ENCODE measurements at regions of chrX and their contacts with region 1.

Region 1: DNA sequence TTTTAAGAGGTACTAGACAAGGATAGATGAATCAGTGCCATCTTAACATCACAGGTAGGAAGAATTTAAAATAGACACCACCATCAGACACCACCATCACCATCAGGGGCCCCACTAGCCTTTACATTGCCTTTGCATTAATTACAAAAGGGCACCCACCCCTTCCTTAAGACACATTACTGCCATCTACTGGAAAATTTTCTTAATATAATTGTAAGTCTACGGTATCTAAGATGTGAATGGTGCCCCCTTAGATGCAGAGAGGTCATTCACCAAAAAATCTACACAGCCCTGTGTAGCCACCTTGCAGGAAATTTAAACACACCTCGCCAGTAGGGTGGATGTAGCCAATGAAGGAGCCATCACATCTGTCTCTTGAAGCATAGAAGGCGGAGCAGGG is 184.1 kb downstream of the MID1IP1 start:
- DNase-seq: no peak
- H3K4me3 Mint-ChIP-seq: no peak overlapping the region
- H3K27ac Mint-ChIP-seq: no peak overlapping the region
- H3K4me1 Mint-ChIP-seq: no peaks in the 10 kb centered on the region
- H3K27me3 Mint-ChIP-seq: no peaks in the 10 kb centered on the region

Region 2: GRCh38 chrX:38754102-38754790 is 231.1 kb before region 1 on chrX:
- CTCF ChIA-PET with region 1: interaction called, 3 read pairs
- POLR2A ChIA-PET with region 1: no interaction called
- intact Hi-C with region 1: loop called (anchors 1 kb)
- DNase-seq: peak; percentile 31
- H3K4me3 Mint-ChIP-seq: no peak overlapping the region
- H3K27ac Mint-ChIP-seq: no peak overlapping the region
- H3K4me1 Mint-ChIP-seq: no peaks in the 10 kb centered on the region
- H3K27me3 Mint-ChIP-seq: no peaks in the 10 kb centered on the region

Region 3: GRCh38 chrX:38768079-38768478 is 217.3 kb before region 1 on chrX:
- CTCF ChIA-PET with region 1: interaction called, 21 read pairs
- POLR2A ChIA-PET with region 1: no interaction called
- intact Hi-C with region 1: loop called (anchors 1 kb)
- DNase-seq: no peak
- H3K4me3 Mint-ChIP-seq: no peak overlapping the region
- H3K27ac Mint-ChIP-seq: no peak overlapping the region
- H3K4me1 Mint-ChIP-seq: no peaks in the 10 kb centered on the region
- H3K27me3 Mint-ChIP-seq: no peaks in the 10 kb centered on the region

Region 4: DNA sequence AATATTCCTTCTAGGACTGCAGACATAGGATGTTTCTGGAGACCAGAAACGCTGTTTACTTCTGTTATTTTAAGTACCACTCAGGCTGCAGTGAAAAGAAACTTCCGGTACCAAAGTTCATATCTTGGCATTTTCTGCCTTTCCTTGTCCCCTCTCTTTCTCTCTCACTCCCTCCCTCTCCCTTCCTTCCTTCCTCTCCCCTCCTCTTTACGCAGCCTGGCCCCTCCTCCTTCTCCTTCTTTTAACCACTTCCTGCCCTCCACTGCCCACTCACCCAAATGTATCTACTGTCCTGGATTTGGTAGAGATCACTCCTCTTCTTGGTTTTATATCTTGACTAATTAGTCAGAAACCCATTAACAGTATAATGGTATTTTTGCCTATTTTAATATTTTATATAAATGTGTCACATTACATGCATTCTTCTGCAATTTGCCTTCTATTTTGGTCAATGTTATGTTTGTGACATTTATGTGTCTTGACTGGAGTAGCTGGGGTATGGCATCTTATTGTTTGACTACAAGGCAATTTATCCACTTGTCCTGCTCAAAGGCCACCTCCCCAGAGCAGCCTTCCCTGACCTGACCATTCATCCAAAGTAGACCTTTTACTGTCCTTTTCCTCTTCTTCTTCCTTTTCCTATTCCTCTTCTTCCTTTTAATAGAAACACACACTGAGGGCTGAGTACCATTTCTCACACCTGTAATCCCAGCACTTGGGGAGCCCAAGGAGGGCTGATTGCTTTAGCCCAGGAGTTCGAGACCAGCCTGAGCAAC is 1055.5 kb after region 1 on chrX:
- CTCF ChIA-PET with region 1: no interaction called
- POLR2A ChIA-PET with region 1: no interaction called
- intact Hi-C with region 1: no loop called
- DNase-seq: peak; percentile 20
- H3K4me3 Mint-ChIP-seq: no peak overlapping the region
- H3K27ac Mint-ChIP-seq: no peak overlapping the region
- H3K4me1 Mint-ChIP-seq: peaks cover 19% of the 10 kb centered on the region
- H3K27me3 Mint-ChIP-seq: no peaks in the 10 kb centered on the region

Measured in activated CD4-positive, alpha-beta memory T cell treated with anti-CD3 and anti-CD28 coated beads for 36 hours (primary cell).